Breast epithelium (tissue), 4 donors: ENCODE measurements at regions of chr3 and their contacts with region 1.

Region 1: GRCh38 chr3:58366699-58367098 is 34.0 kb downstream of the PXK start:
- DNase-seq: no peak
- H3K4me3 ChIP-seq: no peak overlapping the region
- H3K27ac ChIP-seq: no peak overlapping the region
- H3K4me1 ChIP-seq: no peaks in the 10 kb centered on the region
- H3K27me3 ChIP-seq: no peaks in the 10 kb centered on the region
- CTCF ChIP-seq: no peak
- POLR2A ChIP-seq: no peak

Region 2: DNA sequence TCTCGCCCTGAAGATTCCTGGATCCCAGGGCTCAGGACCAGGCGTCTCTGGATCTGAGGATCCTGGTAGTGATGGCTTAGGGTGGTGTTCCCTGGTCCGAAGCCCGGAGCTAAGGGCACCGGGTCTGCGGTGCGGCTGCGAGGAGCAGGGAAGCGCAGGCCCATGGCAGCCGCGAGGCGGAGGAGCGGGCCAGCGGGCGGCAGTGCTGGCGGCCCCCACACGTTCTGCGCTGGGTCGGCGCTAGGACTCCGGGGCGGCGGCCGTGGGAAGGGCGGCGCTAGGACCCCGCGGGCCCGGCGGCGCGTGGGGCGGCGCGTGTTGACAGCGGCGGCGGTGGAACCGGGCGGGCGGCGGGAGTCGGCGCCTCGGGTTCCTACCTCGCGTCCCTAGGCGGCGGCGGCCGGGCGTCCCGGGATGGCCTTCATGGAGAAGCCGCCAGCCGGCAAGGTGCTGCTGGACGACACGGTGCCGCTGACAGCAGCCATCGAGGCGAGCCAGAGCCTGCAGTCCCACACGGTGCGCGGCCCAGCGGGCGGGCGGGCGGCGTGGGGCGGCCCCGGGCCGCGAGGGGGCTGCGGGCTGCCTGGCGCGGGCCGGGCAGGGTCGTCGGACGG is 34.0 kb before region 1 on chr3 and contains the start of gene PXK:
- intact Hi-C with region 1: loop called (anchors 2 kb)
- DNase-seq: peak; percentile 45 to 70
- H3K4me3 ChIP-seq: peak within 1 kb of the TSS; percentile 85 to 91 (median 86)
- H3K27ac ChIP-seq: peak within 1 kb of the TSS; percentile 44 to 74
- H3K4me1 ChIP-seq: peaks cover 0 to 7% of the 10 kb centered on the region in 2 donors
- H3K27me3 ChIP-seq: no peaks in the 10 kb centered on the region
- CTCF ChIP-seq: peak in 1 of 3 donors; percentile 14
- POLR2A ChIP-seq: no peak
- total RNA-seq, gene PXK: 30.3 to 36.1 (median 34.6) TPM